Activated naive CD4-positive, alpha-beta T cell treated with anti-CD3 and anti-CD28 coated beads for 36 hours (primary cell): ENCODE measurements at regions of chr12 and their contacts with region 1.

Region 1: DNA sequence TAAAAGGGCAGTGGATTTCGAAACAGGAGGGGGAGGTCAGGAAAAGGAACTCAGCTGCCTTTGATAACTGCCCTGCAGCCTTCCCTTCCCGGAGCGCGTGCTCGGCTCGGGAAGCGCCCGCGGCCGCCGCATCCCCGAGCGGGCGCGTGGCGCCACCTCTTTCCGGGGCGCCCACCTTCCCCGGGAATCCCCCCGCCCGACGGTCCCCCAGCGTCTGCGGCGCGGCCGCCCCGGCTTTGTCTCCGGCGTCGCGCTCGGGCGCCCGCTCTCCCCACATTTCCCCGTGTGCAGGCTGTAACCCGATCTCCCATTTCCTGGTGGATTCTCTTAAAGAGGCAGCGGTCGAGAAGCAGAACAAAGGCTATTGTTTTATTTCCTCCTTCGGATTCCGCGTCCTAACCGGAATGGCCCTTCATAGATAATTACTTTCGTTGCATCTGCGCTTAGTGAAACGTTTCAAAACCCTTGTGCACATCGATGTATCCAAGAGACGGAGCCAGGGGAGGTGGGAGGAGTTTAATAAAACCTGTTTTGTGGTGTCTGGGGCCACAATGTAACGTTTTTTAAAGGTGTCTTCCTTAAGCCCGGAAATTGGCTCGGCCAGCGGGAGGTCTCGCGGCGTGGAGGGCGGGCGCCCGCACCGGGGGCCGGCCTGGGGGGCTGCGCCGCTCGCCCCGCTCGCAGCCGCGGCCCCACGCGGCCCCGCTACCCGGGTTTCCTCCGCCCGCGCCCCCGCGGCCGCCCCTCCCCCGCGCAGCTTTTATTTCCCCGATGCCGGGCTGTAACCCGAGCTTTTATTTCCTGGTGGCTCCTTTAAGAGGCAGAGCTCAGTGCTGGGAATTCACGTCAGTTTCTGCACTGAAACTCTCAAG is at the start of gene ETV6:
- DNase-seq: peak; percentile 90
- H3K4me3 Mint-ChIP-seq: peak within 1 kb of the TSS; percentile 98
- H3K27ac Mint-ChIP-seq: peak within 1 kb of the TSS; percentile 99
- H3K4me1 Mint-ChIP-seq: peaks cover 27% of the 10 kb centered on the region
- H3K27me3 Mint-ChIP-seq: no peaks in the 10 kb centered on the region
- total RNA-seq, gene ETV6: 48.1 to 48.6 TPM

Region 2: DNA sequence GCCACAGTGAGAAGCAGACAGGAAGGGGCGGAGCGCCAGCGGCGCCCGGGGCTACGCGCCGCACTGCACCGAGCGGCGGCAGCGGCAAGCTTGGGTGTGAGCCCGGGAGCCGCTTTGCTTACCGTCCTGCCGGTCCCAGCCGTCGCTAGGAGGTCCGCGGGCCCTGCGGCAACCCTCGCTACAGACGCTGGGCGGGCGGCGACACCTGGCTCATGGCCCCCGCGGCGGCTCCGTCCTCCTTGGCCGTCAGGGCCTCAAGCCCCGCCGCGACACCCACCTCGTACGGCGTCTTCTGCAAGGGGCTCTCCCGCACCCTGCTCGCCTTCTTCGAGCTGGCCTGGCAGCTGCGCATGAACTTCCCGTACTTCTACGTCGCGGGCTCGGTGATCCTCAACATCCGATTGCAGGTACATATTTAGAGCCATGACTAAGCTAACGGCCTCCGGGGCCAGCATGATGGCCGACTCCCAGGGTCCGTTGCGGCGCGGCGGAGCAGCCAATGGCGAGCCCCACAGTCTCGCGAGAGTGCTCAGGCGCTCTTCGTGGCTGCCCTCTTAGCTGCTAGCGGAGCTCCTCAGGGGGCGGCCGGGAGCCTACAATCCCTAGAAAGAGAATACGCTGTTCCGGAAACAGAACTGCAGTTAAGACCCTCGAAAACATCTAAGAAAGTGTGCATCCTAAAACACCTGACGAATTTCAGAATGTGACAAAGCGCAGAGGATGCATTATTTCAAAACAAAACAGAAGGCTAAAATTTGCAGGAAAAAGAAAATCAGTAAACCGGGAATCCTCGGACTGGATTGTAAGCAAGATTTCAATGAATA is 477.7 kb before region 1 on chr12 and contains the start of gene SMIM10L1:
- CTCF ChIA-PET with region 1: no interaction called
- intact Hi-C with region 1: loop called (anchors 5 kb)
- DNase-seq: peak; percentile 94
- H3K4me3 Mint-ChIP-seq: peak within 1 kb of the TSS; percentile 97
- H3K27ac Mint-ChIP-seq: peak within 1 kb of the TSS; percentile 99
- H3K4me1 Mint-ChIP-seq: peaks cover 38% of the 10 kb centered on the region
- H3K27me3 Mint-ChIP-seq: no peaks in the 10 kb centered on the region
- total RNA-seq, gene SMIM10L1: 5.0 to 5.6 TPM

Region 3: GRCh38 chr12:11581179-11581755 is 67.8 kb before region 1 on chr12:
- CTCF ChIA-PET with region 1: interaction called, 3 read pairs
- intact Hi-C with region 1: loop called (anchors 1 kb)
- DNase-seq: peak; percentile 84
- H3K4me3 Mint-ChIP-seq: no peak overlapping the region
- H3K27ac Mint-ChIP-seq: no peak overlapping the region
- H3K4me1 Mint-ChIP-seq: peaks cover 18% of the 10 kb centered on the region
- H3K27me3 Mint-ChIP-seq: peaks cover 6% of the 10 kb centered on the region

Region 4: GRCh38 chr12:11633968-11634367 is 15.1 kb before region 1 on chr12:
- CTCF ChIA-PET with region 1: no interaction called
- intact Hi-C with region 1: no loop called
- DNase-seq: no peak
- H3K4me3 Mint-ChIP-seq: no peak overlapping the region
- H3K27ac Mint-ChIP-seq: no peak overlapping the region
- H3K4me1 Mint-ChIP-seq: no peaks in the 10 kb centered on the region
- H3K27me3 Mint-ChIP-seq: no peaks in the 10 kb centered on the region

Region 5: DNA sequence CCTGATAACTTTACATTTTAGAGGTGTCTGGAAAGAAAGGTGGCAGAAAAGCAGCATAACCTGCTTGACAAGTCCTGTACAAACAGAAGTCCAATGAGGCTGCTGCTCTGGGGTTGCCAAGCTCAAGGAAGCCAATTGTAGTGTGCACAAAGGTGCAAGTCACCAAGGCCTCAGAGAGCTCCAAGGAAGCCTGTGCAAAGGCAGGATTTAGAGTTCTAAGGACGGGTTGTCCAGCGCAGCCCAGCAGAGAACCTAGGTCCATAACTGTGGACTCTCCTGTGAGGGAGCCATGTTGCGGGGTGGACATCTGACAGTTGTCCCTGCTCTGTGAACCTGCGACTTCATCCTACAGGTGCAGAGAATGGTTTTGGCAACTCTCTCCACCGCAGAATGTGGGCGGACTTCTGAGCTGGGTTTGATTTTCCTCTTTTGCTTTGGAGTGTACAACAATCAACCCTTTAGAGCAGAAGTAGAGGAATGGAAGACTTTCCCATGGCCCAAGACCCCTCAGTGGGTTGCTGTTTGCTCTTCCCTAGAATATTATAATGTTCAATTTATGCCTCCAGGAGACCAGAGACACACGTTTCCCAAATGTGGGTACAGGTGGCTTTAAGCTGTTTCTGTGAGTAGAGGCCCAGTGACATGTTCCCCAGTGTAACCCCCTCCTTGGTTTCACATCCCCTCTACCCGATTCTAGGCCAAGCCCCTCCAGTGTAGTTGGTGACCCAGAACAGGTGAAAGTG is 81.4 kb after region 1 on chr12:
- CTCF ChIA-PET with region 1: interaction called, 3 read pairs
- intact Hi-C with region 1: loop called (anchors 1 kb)
- DNase-seq: peak; percentile 27
- H3K4me3 Mint-ChIP-seq: no peak overlapping the region
- H3K27ac Mint-ChIP-seq: peak overlapping the region; percentile 85
- H3K4me1 Mint-ChIP-seq: peaks cover 86% of the 10 kb centered on the region
- H3K27me3 Mint-ChIP-seq: no peaks in the 10 kb centered on the region

Region 6: GRCh38 chr12:11822081-11822834 is 173.2 kb after region 1 on chr12:
- CTCF ChIA-PET with region 1: no interaction called
- intact Hi-C with region 1: loop called (anchors 1 kb)
- DNase-seq: peak; percentile 83
- H3K4me3 Mint-ChIP-seq: peak overlapping the region; percentile 44
- H3K27ac Mint-ChIP-seq: peak overlapping the region; percentile 91
- H3K4me1 Mint-ChIP-seq: peaks cover 61% of the 10 kb centered on the region
- H3K27me3 Mint-ChIP-seq: no peaks in the 10 kb centered on the region

Region 7: GRCh38 chr12:11981121-11981733 is 332.2 kb after region 1 on chr12:
- CTCF ChIA-PET with region 1: no interaction called
- intact Hi-C with region 1: loop called (anchors 1 kb)
- DNase-seq: peak; percentile 72
- H3K4me3 Mint-ChIP-seq: no peak overlapping the region
- H3K27ac Mint-ChIP-seq: peak overlapping the region; percentile 98
- H3K4me1 Mint-ChIP-seq: peaks cover 51% of the 10 kb centered on the region
- H3K27me3 Mint-ChIP-seq: no peaks in the 10 kb centered on the region